Activated CD4-positive, alpha-beta T cell treated with anti-CD3 and anti-CD28 coated beads for 36 hours (primary cell): ENCODE measurements at regions of chr11 and their contacts with region 1.

Region 1: DNA sequence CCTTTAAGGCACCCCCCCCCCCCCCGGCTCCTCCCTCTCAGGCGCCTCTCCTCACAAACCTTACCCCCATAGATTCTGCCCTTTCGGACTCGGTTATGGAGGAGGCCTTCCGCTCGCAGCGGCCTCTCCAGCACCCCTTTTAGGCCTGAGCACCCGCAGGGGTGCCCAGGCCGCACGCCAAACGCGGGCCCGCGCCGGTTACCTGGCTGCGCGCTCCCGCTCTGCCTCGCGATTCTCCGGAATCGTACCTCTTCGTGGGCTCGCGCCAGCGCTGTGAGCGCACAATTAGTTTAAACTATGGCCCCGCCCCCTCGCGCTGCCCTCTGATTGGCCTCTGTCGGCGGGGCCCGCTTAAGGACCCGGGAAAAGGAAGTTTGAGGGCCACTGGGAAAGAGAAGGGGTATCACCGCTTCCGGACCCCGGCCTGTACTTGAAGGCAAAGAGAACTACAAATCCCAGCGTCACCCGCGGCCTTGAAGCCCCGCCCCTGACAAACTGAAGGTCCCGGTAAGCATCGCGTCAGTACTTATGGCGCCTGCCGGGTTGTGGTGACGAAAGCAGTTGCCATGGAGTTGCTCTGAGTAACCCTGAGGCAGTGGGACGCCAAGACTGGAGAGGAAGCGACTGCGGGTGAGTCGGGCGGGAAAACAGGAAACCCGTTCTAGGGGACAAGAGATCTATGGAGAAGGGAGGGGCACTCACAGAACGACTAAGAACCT is at the starts of genes LRRC51 and NUMA1:
- DNase-seq: peak; percentile 100
- ATAC-seq: peak; percentile 96
- H3K4me3 Mint-ChIP-seq: peak within 1 kb of the TSS; percentile 91
- H3K27ac Mint-ChIP-seq: peak within 1 kb of the TSS; percentile 94
- H3K4me1 Mint-ChIP-seq: peaks cover 37% of the 10 kb centered on the region
- H3K27me3 Mint-ChIP-seq: no peaks in the 10 kb centered on the region
- total RNA-seq, gene LRRC51: 7.7 to 11.6 TPM
- total RNA-seq, gene NUMA1: 154 to 167 TPM

Region 2: DNA sequence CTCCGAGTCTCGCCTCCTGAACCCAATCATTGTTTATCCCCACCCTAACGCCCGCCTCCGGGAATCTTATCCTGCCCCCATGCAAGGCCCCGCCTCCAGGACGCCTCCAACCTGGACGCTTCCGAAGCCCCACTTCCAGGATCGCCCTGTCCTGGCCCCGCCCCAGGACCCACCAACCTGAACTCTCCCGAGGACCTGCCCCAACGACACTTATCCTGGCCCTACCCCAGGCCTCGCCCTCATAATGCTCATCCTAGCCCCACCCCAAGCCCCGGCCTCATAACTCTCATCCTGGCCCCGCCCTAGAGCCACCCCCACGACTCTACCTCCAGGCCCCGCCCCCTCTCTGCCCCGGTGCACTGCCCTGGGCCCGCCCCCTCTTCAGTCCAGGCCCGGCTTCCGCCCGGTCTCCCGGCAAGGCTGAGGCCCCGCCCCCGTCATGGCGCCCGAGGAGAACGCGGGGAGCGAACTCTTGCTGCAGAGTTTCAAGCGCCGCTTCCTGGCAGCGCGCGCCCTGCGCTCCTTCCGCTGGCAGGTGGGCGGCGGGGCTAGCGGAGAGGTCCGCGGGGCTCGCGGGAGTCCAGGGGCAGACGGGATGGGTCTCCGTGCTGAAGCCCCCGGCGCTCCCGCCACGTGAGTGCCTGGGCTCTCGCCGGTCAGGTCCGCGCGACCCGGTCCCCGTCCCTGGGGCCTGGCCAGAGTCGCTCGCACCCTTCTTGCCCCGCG is 293.2 kb before region 1 on chr11:
- CTCF ChIA-PET with region 1: no interaction called
- POLR2A ChIA-PET with region 1: no interaction called
- intact Hi-C with region 1: loop called (anchors 1 kb)
- DNase-seq: peak; percentile 97
- ATAC-seq: peak; percentile 97
- H3K4me3 Mint-ChIP-seq: peak overlapping the region; percentile 84
- H3K27ac Mint-ChIP-seq: peak overlapping the region; percentile 95
- H3K4me1 Mint-ChIP-seq: peaks cover 24% of the 10 kb centered on the region
- H3K27me3 Mint-ChIP-seq: no peaks in the 10 kb centered on the region

Region 3: DNA sequence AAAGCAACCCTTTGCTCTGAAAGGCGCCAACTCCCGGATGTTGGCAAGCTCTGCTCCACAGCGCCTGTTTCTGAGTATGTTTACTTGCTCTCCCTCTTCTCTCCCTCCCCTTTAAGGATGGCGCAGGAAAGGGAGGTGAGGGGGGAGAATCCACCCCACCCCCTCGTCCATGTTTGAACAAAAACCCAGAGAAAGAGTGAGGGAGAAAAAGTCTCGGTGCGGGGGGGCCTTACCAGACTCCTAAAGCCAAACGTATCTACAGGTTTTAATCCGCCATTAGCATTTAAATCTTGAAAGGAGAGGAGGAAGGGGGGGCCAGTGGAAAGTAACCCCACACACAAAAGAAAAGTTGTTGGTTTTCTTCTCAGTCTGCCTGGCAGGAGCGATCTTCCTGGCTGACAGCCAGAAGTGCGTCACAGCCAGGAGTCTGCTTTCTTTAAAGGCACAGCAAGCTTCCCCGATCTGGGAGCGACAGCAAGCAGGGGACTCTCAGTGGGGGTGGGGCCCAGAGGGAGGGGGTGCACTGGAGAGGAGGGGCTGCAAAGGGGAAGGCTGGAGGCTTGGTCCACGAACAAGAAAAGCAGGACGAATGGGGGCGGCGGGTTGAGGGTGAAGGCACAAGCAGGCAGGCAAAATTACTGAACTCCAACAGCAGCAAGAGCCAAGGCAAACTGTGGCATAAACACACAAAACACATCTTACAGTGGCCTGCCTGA is 39.5 kb before region 1 on chr11:
- CTCF ChIA-PET with region 1: interaction called, 12 read pairs
- POLR2A ChIA-PET with region 1: interaction called, 7 read pairs
- intact Hi-C with region 1: loop called (anchors 1 to 2 kb)
- DNase-seq: peak; percentile 86
- ATAC-seq: peak; percentile 76
- H3K4me3 Mint-ChIP-seq: no peak overlapping the region
- H3K27ac Mint-ChIP-seq: no peak overlapping the region
- H3K4me1 Mint-ChIP-seq: peaks cover 35% of the 10 kb centered on the region
- H3K27me3 Mint-ChIP-seq: no peaks in the 10 kb centered on the region

Region 4: GRCh38 chr11:72102946-72103753 is 22.7 kb after region 1 on chr11 and contains the start of gene LAMTOR1:
- CTCF ChIA-PET with region 1: interaction called, 10 read pairs
- POLR2A ChIA-PET with region 1: interaction called, 3 read pairs
- intact Hi-C with region 1: loop called (anchors 1 kb)
- DNase-seq: peak; percentile 99
- ATAC-seq: peak; percentile 98
- H3K4me3 Mint-ChIP-seq: peak within 1 kb of the TSS; percentile 97
- H3K27ac Mint-ChIP-seq: peak within 1 kb of the TSS; percentile 95
- H3K4me1 Mint-ChIP-seq: peaks cover 38% of the 10 kb centered on the region
- H3K27me3 Mint-ChIP-seq: no peaks in the 10 kb centered on the region
- total RNA-seq, gene LAMTOR1: 50.7 to 52.2 TPM

Region 5: GRCh38 chr11:72328366-72329224 is 248.2 kb after region 1 on chr11:
- CTCF ChIA-PET with region 1: no interaction called
- POLR2A ChIA-PET with region 1: no interaction called
- intact Hi-C with region 1: loop called in 1 of 2 experiments (anchors 2 kb)
- DNase-seq: no peak
- ATAC-seq: no peak
- H3K4me3 Mint-ChIP-seq: no peak overlapping the region
- H3K27ac Mint-ChIP-seq: no peak overlapping the region
- H3K4me1 Mint-ChIP-seq: peaks cover 25% of the 10 kb centered on the region
- H3K27me3 Mint-ChIP-seq: no peaks in the 10 kb centered on the region